PC-9 (cell line): ENCODE measurements at regions of chr11 and their contacts with region 1.

Region 1: GRCh38 chr11:65329944-65330403 is 3.7 kb upstream of the DPF2 start:
- DNase-seq: peak; percentile 75 to 80
- H3K4me3 ChIP-seq: peak overlapping the region; percentile 4; the same call in 1 of the 2 replicates
- H3K27ac ChIP-seq: peak overlapping the region; percentile 26; the same call in 1 of the 2 replicates
- H3K4me1 ChIP-seq: peaks cover 13% of the 10 kb centered on the region
- H3K27me3 ChIP-seq: no peaks in the 10 kb centered on the region
- CTCF ChIP-seq: peak; percentile 94

Region 2: DNA sequence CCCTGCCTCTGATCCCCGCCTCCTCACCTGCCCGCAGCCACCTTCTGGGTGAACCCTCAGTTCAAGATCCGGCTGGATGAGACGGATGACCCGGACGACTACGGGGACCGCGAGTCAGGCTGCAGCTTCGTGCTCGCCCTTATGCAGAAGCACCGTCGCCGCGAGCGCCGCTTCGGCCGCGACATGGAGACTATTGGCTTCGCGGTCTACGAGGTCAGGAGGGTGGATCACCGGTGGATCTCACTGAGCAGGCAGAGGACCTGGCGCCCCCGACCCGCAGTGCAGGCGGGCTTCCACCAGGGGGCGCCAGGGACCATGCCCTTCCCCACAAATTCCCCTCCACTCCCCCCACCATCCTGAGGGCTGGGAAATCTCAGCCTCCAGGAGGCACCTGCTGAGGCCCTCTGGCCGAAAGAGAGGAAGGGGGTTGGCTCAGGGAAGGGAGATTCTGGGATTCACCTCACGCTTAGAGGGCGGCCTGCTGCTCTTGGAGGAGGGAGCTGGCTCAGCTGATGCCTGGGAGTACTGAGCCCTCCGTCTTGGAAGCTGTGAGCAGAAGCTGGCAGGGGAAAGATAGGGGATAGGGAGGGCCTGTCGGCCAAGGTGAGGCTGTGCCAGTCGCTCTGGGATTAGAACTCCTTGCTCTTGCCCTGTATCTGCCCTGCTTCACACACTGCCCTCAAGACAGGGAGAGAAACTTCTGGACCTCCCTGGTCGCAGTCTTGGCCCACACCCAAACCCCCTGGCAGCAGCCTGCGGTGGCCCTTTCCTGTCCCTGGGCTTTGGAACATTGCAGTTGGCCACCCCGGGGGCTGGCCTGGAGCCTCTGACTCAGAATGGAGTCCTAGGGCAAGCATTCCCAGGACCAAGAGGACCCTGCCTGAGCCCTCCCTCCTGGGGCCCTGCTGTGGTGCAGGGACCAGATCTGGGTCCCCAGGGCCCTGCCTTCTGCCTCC is 125.0 kb before region 1 on chr11:
- CTCF ChIA-PET with region 1: interaction called, 3 read pairs
- POLR2A ChIA-PET with region 1: interaction called, 3 read pairs
- intact Hi-C with region 1: loop called (anchors 5 kb)
- DNase-seq: peak in 1 of 2 experiments; percentile 57
- H3K4me3 ChIP-seq: no peak overlapping the region
- H3K27ac ChIP-seq: peak overlapping the region; percentile 72
- H3K4me1 ChIP-seq: peaks cover 70% of the 10 kb centered on the region
- H3K27me3 ChIP-seq: no peaks in the 10 kb centered on the region
- CTCF ChIP-seq: peak; percentile 99

Region 3: DNA sequence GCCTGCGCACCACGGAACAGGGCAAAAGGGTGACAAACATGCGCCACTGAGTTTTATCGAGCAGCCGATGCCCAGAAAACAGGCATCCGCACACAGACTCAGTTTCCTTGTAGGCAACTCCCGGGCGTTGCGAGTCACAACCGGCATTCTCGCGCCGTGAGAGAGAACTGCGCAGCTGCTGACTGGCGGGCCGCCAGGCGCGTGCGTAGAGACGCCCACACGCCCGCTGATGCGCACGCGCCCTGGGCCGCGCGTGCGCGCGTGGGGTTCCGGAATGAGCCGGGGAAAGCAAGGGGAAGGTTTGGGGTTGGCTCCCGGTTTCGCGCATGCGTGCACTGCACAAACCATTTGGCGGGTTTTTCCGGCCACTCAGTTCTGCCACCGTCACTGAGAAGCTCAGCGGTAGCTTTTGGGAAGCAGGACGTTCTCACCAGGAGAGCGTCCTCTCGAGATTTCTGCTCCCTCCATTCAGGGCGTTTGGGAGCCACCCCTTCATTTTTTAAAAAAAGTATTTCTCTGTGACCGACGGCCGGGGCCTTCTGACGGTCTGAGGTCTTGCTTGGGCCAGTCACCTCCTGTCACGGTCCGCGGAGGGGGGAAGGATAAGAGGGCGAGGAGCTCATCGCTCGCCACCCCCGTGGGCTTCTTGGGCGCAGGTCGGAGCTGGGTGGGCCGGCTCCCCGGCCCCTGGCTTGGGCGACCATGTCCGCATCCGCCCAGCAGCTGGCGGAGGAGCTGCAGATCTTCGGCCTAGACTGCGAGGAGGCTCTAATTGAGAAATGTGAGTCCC is 68.2 kb before region 1 on chr11 and contains the start of gene POLA2:
- CTCF ChIA-PET with region 1: interaction called, 13 read pairs
- POLR2A ChIA-PET with region 1: interaction called, 3 read pairs
- intact Hi-C with region 1: no loop called
- DNase-seq: peak; percentile 86 to 98
- H3K4me3 ChIP-seq: peak within 1 kb of the TSS; percentile 64
- H3K27ac ChIP-seq: peak within 1 kb of the TSS; percentile 48
- H3K4me1 ChIP-seq: peaks cover 15% of the 10 kb centered on the region
- H3K27me3 ChIP-seq: no peaks in the 10 kb centered on the region
- CTCF ChIP-seq: no peak
- total RNA-seq, gene POLA2: 37.1 and 39.3 TPM in 2 replicates

Region 4: DNA sequence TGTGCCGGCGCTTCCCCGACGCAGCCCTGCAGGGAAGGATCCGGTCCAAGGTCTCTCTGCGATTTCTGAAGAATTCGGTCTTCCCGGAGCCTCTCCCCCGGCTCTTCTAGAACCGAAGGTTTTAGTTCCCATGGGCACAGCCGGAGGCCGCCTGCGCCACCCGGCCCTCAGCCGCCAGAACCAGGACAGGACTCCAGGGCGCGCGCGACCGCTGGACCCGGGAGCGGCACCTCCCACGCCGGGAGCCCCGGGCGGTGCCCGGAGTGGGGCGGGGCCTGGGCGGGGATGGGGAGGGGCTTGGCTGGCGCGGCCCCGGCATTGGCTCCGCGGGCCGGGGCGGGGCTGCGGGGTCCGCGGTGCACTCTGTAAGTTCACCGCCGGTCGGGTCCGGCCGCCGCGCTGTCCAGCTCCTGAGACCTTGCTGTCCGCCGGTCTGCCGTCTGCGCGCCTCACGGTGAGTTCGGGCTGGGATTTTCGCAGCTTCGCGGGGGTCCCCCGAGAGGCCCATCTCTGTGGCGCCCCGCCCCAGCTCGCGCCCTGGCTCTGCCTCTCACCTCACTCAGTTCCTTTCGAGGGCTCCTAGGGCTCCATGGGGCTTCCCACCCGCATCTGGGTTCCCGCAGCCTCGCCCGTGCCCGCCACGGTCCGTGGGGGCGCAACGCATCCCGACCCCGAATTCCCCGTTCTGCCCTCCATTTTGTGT is 15.3 kb before region 1 on chr11 and contains the start of gene CDC42EP2:
- CTCF ChIA-PET with region 1: interaction called, 31 read pairs
- POLR2A ChIA-PET with region 1: interaction called, 20 read pairs
- intact Hi-C with region 1: loop called (anchors 1 kb)
- DNase-seq: peak; percentile 70 to 94
- H3K4me3 ChIP-seq: peak within 1 kb of the TSS; percentile 90
- H3K27ac ChIP-seq: peak within 1 kb of the TSS; percentile 54
- H3K4me1 ChIP-seq: peaks cover 66% of the 10 kb centered on the region
- H3K27me3 ChIP-seq: no peaks in the 10 kb centered on the region
- CTCF ChIP-seq: no peak
- total RNA-seq, gene CDC42EP2: 17.8 and 20.8 TPM in 2 replicates

Region 5: GRCh38 chr11:65401073-65401802 is 71.3 kb after region 1 on chr11:
- CTCF ChIA-PET with region 1: no interaction called
- POLR2A ChIA-PET with region 1: no interaction called
- intact Hi-C with region 1: no loop called
- DNase-seq: no peak
- H3K4me3 ChIP-seq: no peak overlapping the region
- H3K27ac ChIP-seq: no peak overlapping the region
- H3K4me1 ChIP-seq: no peaks in the 10 kb centered on the region
- H3K27me3 ChIP-seq: no peaks in the 10 kb centered on the region
- CTCF ChIP-seq: no peak

Region 6: DNA sequence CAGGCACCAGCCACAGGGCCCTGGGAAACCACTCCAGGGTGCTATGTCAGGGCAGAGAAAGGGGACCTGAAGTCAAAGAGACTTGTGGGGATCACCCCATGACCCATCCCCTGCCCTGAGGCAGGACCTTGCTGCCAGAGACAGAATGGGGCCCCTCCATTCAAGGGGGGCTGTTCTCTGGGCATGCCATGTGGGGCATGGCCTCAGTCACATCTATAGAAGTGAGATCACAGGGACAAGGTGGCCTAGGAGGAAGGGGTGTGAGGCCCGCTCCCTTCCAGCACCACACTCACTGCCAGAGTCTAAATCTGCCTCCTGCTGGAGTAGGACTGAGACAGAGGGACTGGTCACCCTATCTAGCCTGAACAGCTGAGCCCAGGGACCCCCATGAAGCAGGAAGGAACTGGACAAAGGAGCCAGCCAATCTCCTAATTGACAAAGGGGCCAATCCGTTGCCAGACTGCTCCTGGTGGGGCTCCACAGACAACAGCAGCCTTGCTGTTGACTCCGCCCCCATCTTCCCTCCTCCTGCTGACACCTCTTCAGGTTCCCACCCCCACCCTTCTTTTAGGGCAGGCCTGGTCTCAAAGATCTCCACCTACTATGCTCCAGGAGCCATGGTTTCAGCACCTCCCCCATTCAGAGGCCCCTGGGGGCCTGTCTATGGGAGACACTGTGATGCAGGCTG is 118.6 kb after region 1 on chr11:
- CTCF ChIA-PET with region 1: no interaction called
- POLR2A ChIA-PET with region 1: interaction called, 13 read pairs
- intact Hi-C with region 1: no loop called
- DNase-seq: peak in 1 of 2 experiments; percentile 34
- H3K4me3 ChIP-seq: no peak overlapping the region
- H3K27ac ChIP-seq: no peak overlapping the region
- H3K4me1 ChIP-seq: peaks cover 11% of the 10 kb centered on the region
- H3K27me3 ChIP-seq: no peaks in the 10 kb centered on the region
- CTCF ChIP-seq: no peak